GM10248 (cell line): ENCODE measurements at regions of chr7 and their contacts with region 1.

Region 1: DNA sequence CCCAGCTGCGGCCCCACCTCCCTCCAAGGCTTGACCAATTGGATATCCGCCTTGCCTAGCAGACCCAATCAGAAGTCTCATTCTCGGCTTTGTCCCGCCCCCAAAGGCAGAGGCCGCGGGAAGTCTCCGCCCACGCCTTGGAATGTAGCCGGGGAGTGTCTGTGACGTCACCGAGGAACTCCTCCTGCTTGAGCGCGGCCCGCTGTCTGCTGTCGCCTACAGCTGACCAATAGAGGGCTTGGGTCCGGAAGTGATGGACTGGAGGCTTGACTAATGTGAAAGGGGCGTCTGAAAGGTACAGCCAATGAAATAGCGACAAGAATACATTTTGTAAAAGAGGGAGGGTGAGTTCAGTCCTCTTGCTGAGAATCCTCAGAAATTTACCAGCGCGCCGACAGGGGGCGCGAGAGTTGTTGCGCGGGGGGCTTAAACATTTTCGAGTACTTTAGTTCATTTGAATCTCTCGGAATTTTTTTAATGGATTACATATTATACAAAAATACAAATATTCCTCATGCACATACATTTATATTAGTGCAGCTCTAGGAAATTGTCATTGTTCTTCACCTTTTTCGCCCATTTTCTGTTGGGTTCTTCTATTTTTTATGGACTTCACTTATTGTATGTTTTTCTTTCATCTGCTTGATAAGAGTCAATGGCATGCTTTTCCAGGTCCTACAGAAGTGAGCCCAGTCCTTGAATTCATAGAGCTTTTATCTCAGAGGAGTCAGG is 376 bp upstream of the CREB3L2 start:
- DNase-seq: peak; percentile 95
- CTCF ChIP-seq: peak; percentile 72

Region 2: DNA sequence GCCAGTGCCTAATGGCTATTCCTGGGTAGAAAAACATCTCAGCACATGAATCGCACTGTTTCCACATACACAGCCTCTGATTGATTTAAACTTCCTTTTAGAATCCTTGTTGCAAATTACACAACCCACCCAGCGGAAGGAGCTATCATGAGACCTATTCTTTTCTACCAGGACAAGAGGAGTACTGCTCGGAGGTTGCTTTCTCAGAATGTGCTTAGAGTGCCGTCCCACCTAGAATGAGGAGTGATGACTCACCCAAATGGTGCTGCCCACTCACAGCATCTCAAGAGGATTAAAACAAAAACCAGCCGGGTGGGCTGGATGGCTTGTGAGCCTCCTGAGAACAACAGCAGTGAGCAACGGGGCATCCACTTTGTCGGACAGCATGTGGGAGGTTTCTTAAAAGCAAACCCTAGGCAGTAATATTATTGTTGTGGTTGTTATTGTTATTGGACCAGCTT is 284.4 kb before region 1 on chr7:
- CTCF ChIA-PET with region 1: no interaction called
- POLR2A ChIA-PET with region 1: no interaction called
- DNase-seq: no peak
- CTCF ChIP-seq: no peak

Region 3: GRCh38 chr7:137923380-137923779 is 78.9 kb before region 1 on chr7:
- CTCF ChIA-PET with region 1: interaction called, 494 read pairs
- POLR2A ChIA-PET with region 1: no interaction called
- DNase-seq: no peak
- CTCF ChIP-seq: no peak

Region 4: DNA sequence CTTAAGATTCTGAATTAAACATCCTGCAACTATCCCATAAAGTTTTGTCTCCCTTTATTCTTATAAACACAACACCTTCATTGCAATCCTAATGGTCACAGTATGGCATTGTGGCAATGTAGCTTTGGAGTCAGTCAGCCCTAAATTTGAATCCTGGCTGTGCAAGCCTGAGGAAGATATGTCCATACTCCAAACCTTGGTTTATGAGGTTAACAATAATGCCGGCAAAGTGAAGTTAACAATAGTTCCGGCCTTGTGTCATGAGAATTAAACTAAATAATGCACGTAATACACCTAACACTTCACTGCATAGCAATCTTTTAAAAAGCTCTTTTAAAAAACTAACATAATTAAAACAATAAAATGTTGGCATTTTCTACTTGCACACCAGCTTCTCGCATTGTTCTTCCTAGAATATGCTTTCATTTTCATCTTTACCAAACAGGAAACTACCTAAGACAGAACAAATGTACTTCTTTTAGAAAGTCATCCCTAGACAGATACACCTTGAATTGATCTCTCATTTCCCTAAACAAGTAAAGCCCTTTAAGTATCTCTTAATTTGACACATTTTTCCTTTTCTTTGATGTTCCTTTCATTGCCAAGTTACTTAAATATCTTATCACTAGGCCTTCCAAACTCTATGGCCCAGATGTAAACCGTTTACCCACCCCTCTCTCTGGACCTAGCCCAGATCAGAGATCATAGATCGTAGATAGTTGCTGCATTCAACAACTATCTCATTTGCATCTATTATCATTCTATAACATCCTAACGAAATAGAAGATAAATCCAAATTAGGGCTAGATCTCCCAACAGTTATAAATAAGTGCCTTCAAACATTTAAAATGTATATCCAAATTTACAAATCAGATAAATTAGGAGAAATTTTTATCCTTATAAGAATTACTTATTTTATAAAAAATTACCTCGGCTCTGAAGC is 67.0 kb before region 1 on chr7:
- CTCF ChIA-PET with region 1: interaction called, 19 read pairs
- POLR2A ChIA-PET with region 1: no interaction called
- DNase-seq: peak; percentile 54
- CTCF ChIP-seq: no peak

Region 5: DNA sequence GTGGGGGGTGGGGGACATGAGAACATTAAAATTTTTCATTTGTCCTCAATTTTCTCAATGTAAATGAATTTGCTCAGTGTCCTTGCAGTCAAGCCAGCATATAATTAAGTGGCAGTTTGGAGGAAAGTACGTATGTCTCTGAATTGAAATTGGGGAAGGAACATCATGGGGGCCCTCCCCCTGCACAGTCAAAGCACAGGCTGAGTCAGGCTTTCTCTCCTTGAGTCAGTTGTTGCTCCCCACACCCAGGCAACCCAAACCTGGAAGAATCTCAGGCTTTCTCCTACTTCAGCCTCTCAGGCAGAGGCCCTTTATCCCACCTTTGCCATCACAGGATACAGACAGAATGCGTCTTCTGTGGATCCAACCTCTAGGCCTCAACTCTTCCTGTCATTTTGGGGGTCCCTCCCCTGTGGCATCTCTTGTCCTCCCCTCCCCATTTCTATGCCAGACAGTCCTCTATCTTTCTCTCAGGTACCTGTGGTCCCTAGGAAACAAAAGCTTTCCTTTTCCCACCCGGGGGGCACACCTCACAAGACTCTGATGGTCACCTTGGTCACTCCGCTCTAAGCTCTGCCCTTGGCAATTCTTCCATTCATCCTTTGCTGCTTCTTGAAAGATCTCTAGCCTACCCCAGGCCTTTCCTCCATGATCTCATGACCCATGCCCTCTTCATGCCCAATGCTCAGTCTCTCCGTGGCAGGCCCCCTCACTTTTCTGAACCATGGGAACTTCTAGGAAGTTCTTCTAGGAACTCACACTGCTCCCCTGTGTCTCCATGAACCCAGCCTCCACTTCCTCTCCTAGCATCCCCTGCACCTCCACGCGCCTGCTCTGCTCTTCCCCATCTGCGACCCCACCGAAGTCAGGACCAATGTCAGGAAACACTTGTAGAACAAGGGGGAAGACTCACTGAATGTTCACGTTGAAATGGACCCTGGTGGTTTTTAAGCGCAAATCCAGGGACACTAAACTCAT is 40.8 kb before region 1 on chr7:
- CTCF ChIA-PET with region 1: interaction called, 14 read pairs
- POLR2A ChIA-PET with region 1: interaction called, 4 read pairs
- DNase-seq: peak; percentile 67
- CTCF ChIP-seq: no peak

Region 6: GRCh38 chr7:137975221-137975620 is 27.0 kb before region 1 on chr7:
- CTCF ChIA-PET with region 1: interaction called, 34 read pairs
- POLR2A ChIA-PET with region 1: no interaction called
- DNase-seq: peak; percentile 42
- CTCF ChIP-seq: no peak

Region 7: GRCh38 chr7:137985253-137985896 is 16.9 kb before region 1 on chr7:
- CTCF ChIA-PET with region 1: interaction called, 67 read pairs
- POLR2A ChIA-PET with region 1: interaction called, 5 read pairs
- DNase-seq: peak; percentile 65
- CTCF ChIP-seq: no peak

Region 8: DNA sequence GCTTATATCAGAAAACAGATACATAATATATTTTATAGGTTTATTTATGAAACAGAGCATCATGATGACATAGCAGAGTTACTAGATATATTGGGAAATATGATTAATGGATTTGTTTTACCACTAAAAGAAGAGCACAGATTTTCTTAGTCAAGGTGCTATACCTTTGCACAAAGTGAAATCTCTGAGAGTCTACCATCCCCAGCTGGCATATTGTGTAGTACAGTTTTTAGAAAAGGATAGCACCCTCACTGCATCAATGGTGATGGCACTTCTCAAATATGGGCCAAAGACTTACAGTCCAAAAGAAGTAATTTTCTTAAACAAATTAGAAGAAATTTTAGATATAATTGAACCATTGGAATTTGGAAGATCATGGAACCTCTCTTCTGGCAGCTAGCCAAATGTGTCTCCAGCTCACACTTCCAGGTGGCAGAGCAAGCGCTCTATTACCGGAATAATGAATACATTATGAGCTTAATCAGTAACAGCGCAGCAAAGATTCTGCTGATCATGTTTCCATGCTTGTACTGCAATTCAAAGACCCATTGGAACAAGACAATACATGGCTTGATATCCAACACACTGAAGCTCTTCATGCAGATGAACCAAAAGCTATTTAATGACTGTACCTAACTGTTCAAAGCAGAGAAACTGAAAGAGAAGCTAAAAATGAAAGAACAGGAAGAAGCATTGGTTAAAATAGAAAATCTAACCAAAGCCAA is 21.5 kb after region 1 on chr7:
- CTCF ChIA-PET with region 1: interaction called, 219 read pairs
- POLR2A ChIA-PET with region 1: no interaction called
- DNase-seq: peak; percentile 55
- CTCF ChIP-seq: no peak

Region 9: DNA sequence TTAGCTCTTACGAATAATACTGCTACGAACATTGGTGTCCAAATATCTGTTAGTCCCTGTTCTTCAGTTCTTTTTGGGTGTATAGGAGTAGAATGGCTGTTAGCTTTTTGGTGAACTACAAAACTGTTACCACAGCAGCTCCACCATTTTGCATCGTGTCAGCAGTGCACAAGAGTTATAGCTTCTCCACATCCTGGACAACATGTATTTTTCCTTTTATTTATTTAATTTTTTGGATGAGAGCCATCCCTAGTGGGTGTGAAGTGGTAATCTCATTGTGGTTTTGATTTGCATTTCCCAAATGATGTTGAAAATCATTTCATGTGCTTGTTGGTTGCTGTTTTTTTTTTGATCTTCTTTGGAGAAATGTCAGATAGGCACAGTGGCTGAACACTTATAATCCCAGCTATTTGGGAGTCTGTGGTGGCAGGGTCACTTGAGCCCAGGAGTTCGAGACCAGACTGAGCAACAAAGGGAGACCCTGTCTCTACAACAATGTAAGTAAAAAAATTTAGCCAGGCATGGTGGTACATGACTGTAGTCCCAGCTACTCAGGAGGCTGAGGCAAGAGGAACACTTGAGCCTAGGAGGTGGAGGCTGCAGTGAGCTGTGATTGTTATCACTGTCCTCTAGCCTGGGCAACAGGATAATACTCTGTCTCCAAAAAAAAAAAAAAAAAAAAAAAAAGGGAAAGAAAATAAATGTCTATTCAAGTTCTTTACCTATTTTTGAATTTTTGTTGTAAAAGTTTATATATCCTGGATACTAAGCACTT is 489.5 kb after region 1 on chr7:
- CTCF ChIA-PET with region 1: no interaction called
- POLR2A ChIA-PET with region 1: no interaction called
- DNase-seq: no peak
- CTCF ChIP-seq: no peak